Naive thymus-derived CD4-positive, alpha-beta T cell (primary cell): ENCODE measurements at regions of chr22 and their contacts with region 1.

Region 1: GRCh38 chr22:19891317-19892256 is 36.9 kb upstream of the GNB1L start:
- DNase-seq: peak; percentile 39 to 89 (median 86)
- ATAC-seq: peak; percentile 90
- H3K4me3 ChIP-seq: peak overlapping the region; percentile 67
- H3K4me3 Mint-ChIP-seq: peak overlapping the region; percentile 80 to 91 (median 86)
- H3K27ac ChIP-seq: peak overlapping the region; percentile 84
- H3K27ac Mint-ChIP-seq: peak overlapping the region; percentile 92 to 100 (median 99)
- H3K4me1 ChIP-seq: peaks cover 35 to 96% of the 10 kb centered on the region in 2 donors
- H3K4me1 Mint-ChIP-seq: peaks cover 37 to 96% (median 84%) of the 10 kb centered on the region in 7 donors
- H3K27me3 ChIP-seq: no peaks in the 10 kb centered on the region
- H3K27me3 Mint-ChIP-seq: no peaks in the 10 kb centered on the region

Region 2: GRCh38 chr22:19730655-19731360 is 160.8 kb before region 1 on chr22:
- CTCF ChIA-PET with region 1: interaction called, 16 read pairs
- POLR2A ChIA-PET with region 1: interaction called, 4 read pairs
- intact Hi-C with region 1: loop called in 1 of 2 experiments (anchors 5 kb)
- DNase-seq: peak; percentile 68 to 92 (median 83)
- ATAC-seq: peak; percentile 88
- H3K4me3 ChIP-seq: peak overlapping the region; percentile 64
- H3K4me3 Mint-ChIP-seq: peak overlapping the region; percentile 81 to 89 (median 85)
- H3K27ac ChIP-seq: peak overlapping the region; percentile 4
- H3K27ac Mint-ChIP-seq: peak overlapping the region in 5 of 9 donors; percentile 41 to 85 (median 48)
- H3K4me1 ChIP-seq: no peaks in the 10 kb centered on the region
- H3K4me1 Mint-ChIP-seq: peaks cover 0 to 5% (median 2%) of the 10 kb centered on the region in 7 donors
- H3K27me3 ChIP-seq: no peaks in the 10 kb centered on the region
- H3K27me3 Mint-ChIP-seq: peaks cover 0 to 12% (median 0%) of the 10 kb centered on the region in 5 donors

Region 3: DNA sequence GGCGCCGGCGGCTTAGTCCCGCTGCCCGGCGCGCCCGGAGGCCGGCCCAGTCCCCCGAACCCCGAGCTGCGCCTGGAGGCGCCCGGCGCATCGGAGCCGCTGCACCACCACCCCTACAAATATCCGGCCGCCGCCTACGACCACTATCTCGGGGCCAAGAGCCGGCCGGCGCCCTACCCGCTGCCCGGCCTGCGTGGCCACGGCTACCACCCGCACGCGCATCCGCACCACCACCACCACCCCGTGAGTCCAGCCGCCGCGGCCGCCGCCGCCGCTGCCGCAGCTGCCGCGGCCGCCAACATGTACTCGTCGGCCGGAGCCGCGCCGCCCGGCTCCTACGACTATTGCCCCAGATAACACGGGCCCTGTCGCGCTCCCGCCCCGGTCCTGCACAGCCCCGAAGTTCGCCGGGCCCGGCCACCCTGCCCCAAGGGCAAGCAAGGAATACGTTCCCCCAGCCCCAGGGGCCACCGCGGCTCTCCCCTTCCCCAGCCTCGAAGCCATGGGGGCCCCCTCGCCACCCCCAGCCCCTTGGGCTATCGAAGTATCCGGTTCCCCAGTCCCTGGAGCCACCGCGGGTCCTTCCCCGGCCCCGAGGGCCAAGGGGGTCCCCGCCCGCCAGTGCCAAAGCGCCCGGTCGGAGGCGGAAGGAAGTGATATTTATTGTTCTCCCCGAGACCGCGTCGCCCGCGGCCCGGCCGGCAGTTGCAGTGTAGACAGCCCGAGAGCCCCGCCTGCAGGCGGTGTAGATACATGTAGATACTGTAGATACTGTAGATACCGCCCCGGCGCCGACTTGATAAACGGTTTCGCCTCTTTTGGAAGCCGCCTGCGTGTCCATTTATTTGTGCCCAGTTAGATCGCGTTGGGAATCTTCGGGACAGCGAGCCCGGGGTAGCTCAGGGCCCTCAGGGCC is 124.8 kb before region 1 on chr22:
- CTCF ChIA-PET with region 1: no interaction called
- POLR2A ChIA-PET with region 1: no interaction called
- intact Hi-C with region 1: loop called in 1 of 2 experiments (anchors 5 kb)
- DNase-seq: peak in 3 of 9 donors; percentile 23 to 52 (median 31)
- ATAC-seq: peak; percentile 79
- H3K4me3 ChIP-seq: no peak overlapping the region
- H3K4me3 Mint-ChIP-seq: peak overlapping the region in 9 of 10 donors; percentile 25 to 74 (median 43)
- H3K27ac ChIP-seq: no peak overlapping the region
- H3K27ac Mint-ChIP-seq: no peak overlapping the region
- H3K4me1 ChIP-seq: peaks cover 0 to 15% of the 10 kb centered on the region in 2 donors
- H3K4me1 Mint-ChIP-seq: peaks cover 0 to 28% (median 12%) of the 10 kb centered on the region in 7 donors
- H3K27me3 ChIP-seq: peaks cover 9 to 37% of the 10 kb centered on the region in 2 donors
- H3K27me3 Mint-ChIP-seq: peaks cover 45 to 67% (median 53%) of the 10 kb centered on the region in 5 donors

Region 4: DNA sequence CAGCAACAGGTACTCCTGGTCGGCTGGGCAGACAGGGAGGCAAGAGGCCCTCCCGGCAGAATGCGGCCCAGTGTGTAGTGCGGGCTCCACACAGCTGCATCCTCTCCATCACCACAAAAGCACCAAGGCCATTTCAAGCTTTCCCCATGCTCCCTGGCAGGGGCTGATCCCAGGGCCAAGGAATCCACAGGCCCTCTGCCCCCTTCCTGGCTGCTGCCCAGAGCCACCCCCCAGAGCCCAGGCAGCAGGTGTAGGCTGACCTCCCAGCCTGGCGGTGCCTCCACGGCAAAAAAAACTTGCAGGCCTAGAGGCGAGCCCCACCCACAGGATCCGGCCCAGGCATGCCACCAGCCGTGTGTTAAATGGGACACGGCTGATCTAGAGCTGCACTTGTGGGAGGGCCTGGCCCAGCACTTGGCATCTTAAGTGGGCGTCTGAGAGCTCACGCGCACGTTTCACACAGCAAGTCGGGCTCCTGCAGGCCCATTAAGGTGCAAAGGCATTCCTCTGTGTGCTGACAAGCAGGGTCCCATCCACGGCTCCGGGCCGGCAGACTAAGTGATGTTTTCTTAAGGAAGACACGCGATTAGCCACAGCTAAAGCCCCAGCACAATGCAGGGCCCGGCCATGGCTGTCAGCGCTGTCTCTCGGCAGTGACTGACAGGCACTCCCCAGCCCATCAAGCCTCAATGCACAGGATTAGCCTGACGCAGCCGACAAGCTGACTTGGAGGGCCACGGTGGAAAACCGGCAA is 17.1 kb before region 1 on chr22:
- CTCF ChIA-PET with region 1: interaction called, 3 read pairs
- POLR2A ChIA-PET with region 1: interaction called, 36 read pairs
- intact Hi-C with region 1: loop called in 1 of 2 experiments (anchors 1 kb)
- DNase-seq: peak in 4 of 9 donors; percentile 37 to 51 (median 46)
- ATAC-seq: peak; percentile 68
- H3K4me3 ChIP-seq: no peak overlapping the region
- H3K4me3 Mint-ChIP-seq: peak overlapping the region; percentile 9 to 61 (median 52)
- H3K27ac ChIP-seq: peak overlapping the region; percentile 47
- H3K27ac Mint-ChIP-seq: peak overlapping the region in 8 of 9 donors; percentile 52 to 81 (median 72)
- H3K4me1 ChIP-seq: peaks cover 0 to 17% of the 10 kb centered on the region in 2 donors
- H3K4me1 Mint-ChIP-seq: peaks cover 0 to 13% (median 10%) of the 10 kb centered on the region in 7 donors
- H3K27me3 ChIP-seq: no peaks in the 10 kb centered on the region
- H3K27me3 Mint-ChIP-seq: no peaks in the 10 kb centered on the region

Region 5: DNA sequence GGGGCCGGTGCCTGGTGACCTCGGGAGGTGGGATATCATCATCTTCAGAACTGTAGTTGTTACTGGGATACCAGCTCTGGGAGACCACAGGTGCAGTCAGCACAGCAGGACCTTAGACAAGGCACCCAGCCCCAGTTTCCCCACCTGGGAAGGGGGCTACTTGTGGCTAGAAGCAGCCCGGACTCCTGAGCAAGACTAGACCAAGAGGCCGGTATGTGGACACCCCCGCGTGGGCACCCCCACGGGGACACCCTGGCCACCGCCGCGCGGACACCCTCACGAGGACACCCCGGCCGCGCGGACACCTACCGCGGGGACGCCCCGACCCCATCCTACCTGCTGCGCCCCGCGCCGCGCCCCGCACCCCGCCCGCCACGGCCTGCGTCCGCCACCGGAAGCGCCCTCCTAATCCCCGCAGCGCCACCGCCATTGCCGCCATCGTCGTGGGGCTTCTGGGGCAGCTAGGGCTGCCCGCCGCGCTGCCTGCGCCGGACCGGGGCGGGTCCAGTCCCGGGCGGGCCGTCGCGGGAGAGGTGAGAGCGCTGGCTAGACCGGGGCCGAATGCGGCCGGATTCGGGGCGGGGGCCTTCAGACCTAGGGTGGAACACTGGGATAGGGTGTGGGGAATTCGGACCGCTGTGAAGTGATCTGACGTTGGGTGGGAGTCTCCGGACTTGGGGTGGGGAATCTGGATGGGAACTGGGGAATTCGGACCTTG is 49.9 kb after region 1 on chr22 and contains the starts of genes COMT and TXNRD2:
- CTCF ChIA-PET with region 1: no interaction called
- POLR2A ChIA-PET with region 1: no interaction called
- intact Hi-C with region 1: loop called in 1 of 2 experiments (anchors 2 kb)
- DNase-seq: peak; percentile 58 to 78 (median 69)
- ATAC-seq: peak; percentile 92
- H3K4me3 ChIP-seq: peak within 1 kb of the TSS; percentile 99
- H3K4me3 Mint-ChIP-seq: peak within 1 kb of the TSS; percentile 91 to 99 (median 95)
- H3K27ac ChIP-seq: peak within 1 kb of the TSS; percentile 85
- H3K27ac Mint-ChIP-seq: peak within 1 kb of the TSS; percentile 94 to 98 (median 95)
- H3K4me1 ChIP-seq: peaks cover 20 to 22% of the 10 kb centered on the region in 2 donors
- H3K4me1 Mint-ChIP-seq: peaks cover 31 to 61% (median 40%) of the 10 kb centered on the region in 7 donors
- H3K27me3 ChIP-seq: no peaks in the 10 kb centered on the region
- H3K27me3 Mint-ChIP-seq: no peaks in the 10 kb centered on the region
- total RNA-seq, gene COMT: 30.0 to 80.7 (median 36.7) TPM
- total RNA-seq, gene TXNRD2: 24.7 to 39.0 (median 36.7) TPM